ENCODE measurements at regions of chr3 and their contacts with region 1.

Region 1: GRCh38 chr3:122484985-122485384 is 29.8 kb downstream of the KPNA1 start:
- DNase-seq: no peak
- H3K4me3 Mint-ChIP-seq: no peak overlapping the region
- H3K27ac Mint-ChIP-seq: no peak overlapping the region
- H3K4me1 Mint-ChIP-seq: peaks cover 53% of the 10 kb centered on the region
- H3K27me3 Mint-ChIP-seq: no peaks in the 10 kb centered on the region

Region 2: GRCh38 chr3:121735047-121735696 is 749.8 kb before region 1 on chr3:
- CTCF ChIA-PET with region 1: no interaction called
- POLR2A ChIA-PET with region 1: no interaction called
- intact Hi-C with region 1: loop called (anchors 1 kb)
- DNase-seq: no peak
- H3K4me3 Mint-ChIP-seq: no peak overlapping the region
- H3K27ac Mint-ChIP-seq: peak overlapping the region; percentile 28
- H3K4me1 Mint-ChIP-seq: peaks cover 46% of the 10 kb centered on the region
- H3K27me3 Mint-ChIP-seq: no peaks in the 10 kb centered on the region

Region 3: DNA sequence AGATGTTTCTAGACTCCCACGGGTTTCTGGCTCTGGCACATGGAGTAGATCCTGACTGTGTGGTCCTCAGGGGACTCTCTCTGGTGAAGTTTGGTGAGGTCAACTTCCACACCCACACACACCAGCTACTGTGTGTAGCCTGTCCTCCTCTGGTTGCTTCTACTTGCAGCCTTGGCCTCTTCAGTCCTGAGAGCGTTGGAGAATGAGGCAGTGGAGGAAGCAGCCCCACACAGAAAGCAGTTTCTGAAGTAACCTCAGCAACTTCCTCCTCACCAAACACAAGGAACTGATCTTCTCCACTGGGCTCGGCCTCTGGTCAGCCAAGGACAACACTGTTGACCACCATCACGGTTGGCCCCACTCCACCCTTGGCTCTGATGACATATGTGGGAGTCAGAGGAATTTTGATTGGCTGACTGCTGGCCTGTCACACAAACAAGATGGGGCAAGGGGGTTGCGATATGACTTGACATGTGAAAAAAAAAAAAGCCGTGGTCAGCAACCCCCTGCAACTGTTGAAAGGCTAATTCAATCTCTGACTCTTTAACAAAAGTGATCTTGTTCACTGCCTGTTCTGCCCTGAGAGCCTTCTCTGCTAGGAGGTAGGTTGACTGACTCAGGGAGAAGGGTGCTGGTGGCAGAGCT is 410.2 kb before region 1 on chr3:
- CTCF ChIA-PET with region 1: no interaction called
- POLR2A ChIA-PET with region 1: no interaction called
- intact Hi-C with region 1: no loop called
- DNase-seq: peak; percentile 39
- H3K4me3 Mint-ChIP-seq: no peak overlapping the region
- H3K27ac Mint-ChIP-seq: peak overlapping the region; percentile 50
- H3K4me1 Mint-ChIP-seq: peaks cover 26% of the 10 kb centered on the region
- H3K27me3 Mint-ChIP-seq: peaks cover 19% of the 10 kb centered on the region

Region 4: GRCh38 chr3:122132949-122133540 is 351.9 kb before region 1 on chr3:
- CTCF ChIA-PET with region 1: no interaction called
- POLR2A ChIA-PET with region 1: no interaction called
- intact Hi-C with region 1: no loop called
- DNase-seq: no peak
- H3K4me3 Mint-ChIP-seq: no peak overlapping the region
- H3K27ac Mint-ChIP-seq: no peak overlapping the region
- H3K4me1 Mint-ChIP-seq: peaks cover 2% of the 10 kb centered on the region
- H3K27me3 Mint-ChIP-seq: peaks cover 3% of the 10 kb centered on the region

Region 5: DNA sequence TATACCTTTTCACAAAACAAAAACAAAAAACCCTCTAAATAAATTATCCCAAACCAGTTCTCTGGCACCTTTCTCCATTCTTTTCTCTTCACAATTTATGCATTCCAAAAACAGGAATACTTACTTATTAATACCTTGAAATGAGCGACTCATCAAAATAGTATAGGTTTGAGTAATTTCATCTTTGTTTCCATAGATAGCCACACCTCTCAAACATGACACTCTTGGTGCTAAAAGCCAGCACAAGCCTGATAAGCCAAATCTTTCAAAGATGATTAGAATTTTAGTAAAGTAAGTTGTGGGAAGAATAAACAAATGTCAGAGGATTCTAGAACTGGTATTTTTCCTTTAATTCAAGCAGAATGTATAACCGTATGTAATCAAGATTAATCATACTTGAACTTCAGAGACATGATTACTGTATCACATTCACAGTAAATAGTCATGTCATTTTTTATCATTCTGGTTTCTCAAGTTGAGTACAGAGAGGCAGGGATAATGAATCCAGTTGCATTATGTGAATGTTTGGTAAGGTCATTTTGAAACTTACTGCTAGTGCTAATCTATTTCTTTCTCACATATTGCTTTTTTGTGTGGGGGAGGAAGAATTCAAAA is 57.0 kb before region 1 on chr3:
- CTCF ChIA-PET with region 1: no interaction called
- POLR2A ChIA-PET with region 1: interaction called, 4 read pairs
- intact Hi-C with region 1: loop called (anchors 1 kb)
- DNase-seq: no peak
- H3K4me3 Mint-ChIP-seq: no peak overlapping the region
- H3K27ac Mint-ChIP-seq: peak overlapping the region; percentile 74
- H3K4me1 Mint-ChIP-seq: peaks cover 23% of the 10 kb centered on the region
- H3K27me3 Mint-ChIP-seq: no peaks in the 10 kb centered on the region

Region 6: GRCh38 chr3:122497425-122497824 is 12.4 kb after region 1 on chr3:
- CTCF ChIA-PET with region 1: interaction called, 3 read pairs
- POLR2A ChIA-PET with region 1: no interaction called
- intact Hi-C with region 1: loop called (anchors 1 kb)
- DNase-seq: peak; percentile 55
- H3K4me3 Mint-ChIP-seq: no peak overlapping the region
- H3K27ac Mint-ChIP-seq: no peak overlapping the region
- H3K4me1 Mint-ChIP-seq: peaks cover 35% of the 10 kb centered on the region
- H3K27me3 Mint-ChIP-seq: no peaks in the 10 kb centered on the region

Region 7: DNA sequence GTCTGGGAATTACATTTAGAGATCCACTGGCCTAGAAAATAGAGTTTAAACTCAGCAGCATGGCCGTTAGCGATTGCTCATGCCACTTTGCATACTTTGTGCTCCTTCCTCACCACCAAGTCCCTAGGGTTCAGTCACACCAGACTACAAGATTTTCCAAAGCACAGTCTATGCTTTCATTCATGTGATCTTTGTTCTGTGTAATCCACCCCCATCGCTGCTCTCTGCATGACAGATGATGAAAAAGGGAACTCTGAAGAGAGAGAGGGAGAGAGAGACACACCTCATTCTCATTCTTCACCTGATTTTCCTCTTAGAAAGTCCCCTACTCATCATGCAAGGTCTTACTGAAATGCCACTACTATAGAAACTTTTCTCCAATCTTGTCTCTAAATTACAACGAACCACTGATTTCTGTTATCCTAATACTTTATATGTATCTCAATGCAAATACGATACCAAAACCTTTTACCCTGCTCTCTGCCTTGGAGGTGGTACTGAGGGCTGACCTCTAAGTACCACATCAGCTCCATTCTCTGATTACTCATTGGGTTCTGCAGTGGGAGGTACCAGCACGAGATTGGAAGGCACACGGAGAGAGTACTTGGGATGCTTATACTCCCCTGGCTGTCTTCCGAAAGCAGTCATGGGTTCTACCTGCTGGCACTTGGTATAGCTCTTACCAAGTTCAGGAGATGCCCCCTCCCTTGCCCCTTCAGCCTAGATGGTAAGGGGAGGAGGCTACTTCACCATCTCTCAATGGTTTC is 91.4 kb after region 1 on chr3:
- CTCF ChIA-PET with region 1: no interaction called
- POLR2A ChIA-PET with region 1: no interaction called
- intact Hi-C with region 1: loop called (anchors 1 kb)
- DNase-seq: peak; percentile 70
- H3K4me3 Mint-ChIP-seq: peak overlapping the region; percentile 35
- H3K27ac Mint-ChIP-seq: peak overlapping the region; percentile 82
- H3K4me1 Mint-ChIP-seq: peaks cover 61% of the 10 kb centered on the region
- H3K27me3 Mint-ChIP-seq: no peaks in the 10 kb centered on the region

Region 8: GRCh38 chr3:122642935-122643334 is 157.9 kb after region 1 on chr3:
- CTCF ChIA-PET with region 1: no interaction called
- POLR2A ChIA-PET with region 1: no interaction called
- intact Hi-C with region 1: no loop called
- DNase-seq: no peak
- H3K4me3 Mint-ChIP-seq: no peak overlapping the region
- H3K27ac Mint-ChIP-seq: peak overlapping the region; percentile 42
- H3K4me1 Mint-ChIP-seq: peaks cover 40% of the 10 kb centered on the region
- H3K27me3 Mint-ChIP-seq: no peaks in the 10 kb centered on the region

Measured in activated CD4-positive, alpha-beta memory T cell treated with anti-CD3 and anti-CD28 coated beads for 36 hours (primary cell).